ENCODE measurements at regions of chr5 and their contacts with region 1.

Region 1: GRCh38 chr5:135466178-135467050 is 14.3 kb upstream of the TIFAB start:
- DNase-seq: peak; percentile 84
- ATAC-seq: peak; percentile 88

Region 2: GRCh38 chr5:135242021-135242865 is 224.2 kb before region 1 on chr5:
- intact Hi-C with region 1: no loop called
- DNase-seq: no peak
- ATAC-seq: peak; percentile 15

Region 3: GRCh38 chr5:135551593-135552447 is 85.4 kb after region 1 on chr5:
- intact Hi-C with region 1: loop called (anchors 1 kb)
- DNase-seq: no peak
- ATAC-seq: peak; percentile 80

Region 4: GRCh38 chr5:135625961-135626360 is 159.5 kb after region 1 on chr5:
- intact Hi-C with region 1: no loop called
- DNase-seq: no peak
- ATAC-seq: no peak

Region 5: GRCh38 chr5:135829681-135830383 is 363.4 kb after region 1 on chr5:
- intact Hi-C with region 1: loop called (anchors 5 kb)
- DNase-seq: no peak
- ATAC-seq: peak; percentile 47